HCT116 (cell line): ENCODE measurements at regions of chr1 and their contacts with region 1.

Region 1: GRCh38 chr1:208245185-208245705 is 1.1 kb upstream of the PLXNA2 start:
- DNase-seq: peak; percentile 81
- ATAC-seq: peak; percentile 80
- H3K4me3 ChIP-seq: peak overlapping the region; percentile 44 to 62
- H3K27ac ChIP-seq: no peak overlapping the region
- H3K4me1 ChIP-seq: peaks cover 9 to 18% of the 10 kb centered on the region in 2 experiments; a peak in 3 of 4 replicates
- H3K27me3 ChIP-seq: peaks cover 51% of the 10 kb centered on the region
- CTCF ChIP-seq: peak; percentile 73 to 83 (median 79)
- POLR2A ChIP-seq: no peak
- RAD21 ChIP-seq: peak; percentile 77

Region 2: GRCh38 chr1:207997486-207998268 is 247.6 kb before region 1 on chr1:
- CTCF ChIA-PET with region 1: interaction called, 10 read pairs
- POLR2A ChIA-PET with region 1: no interaction called
- RAD21 ChIA-PET with region 1: no interaction called
- intact Hi-C with region 1: no loop called
- DNase-seq: peak; percentile 41
- ATAC-seq: peak; percentile 92
- H3K4me3 ChIP-seq: no peak overlapping the region
- H3K27ac ChIP-seq: no peak overlapping the region
- H3K4me1 ChIP-seq: no peaks in the 10 kb centered on the region
- H3K27me3 ChIP-seq: peaks cover 20% of the 10 kb centered on the region
- CTCF ChIP-seq: peak; percentile 56 to 75 (median 74)
- POLR2A ChIP-seq: no peak
- RAD21 ChIP-seq: peak; percentile 30; the same call in 1 of the 2 replicates

Region 3: GRCh38 chr1:208025031-208025430 is 220.2 kb before region 1 on chr1:
- CTCF ChIA-PET with region 1: interaction called, 73 read pairs
- POLR2A ChIA-PET with region 1: interaction called, 3 read pairs
- RAD21 ChIA-PET with region 1: interaction called, 5 to 8 read pairs
- intact Hi-C with region 1: loop called (anchors 1 kb)
- DNase-seq: no peak
- ATAC-seq: no peak
- H3K4me3 ChIP-seq: no peak overlapping the region
- H3K27ac ChIP-seq: no peak overlapping the region
- H3K4me1 ChIP-seq: no peaks in the 10 kb centered on the region
- H3K27me3 ChIP-seq: peaks cover 20% of the 10 kb centered on the region
- CTCF ChIP-seq: no peak
- POLR2A ChIP-seq: no peak
- RAD21 ChIP-seq: no peak

Region 4: GRCh38 chr1:208036109-208036808 is 209.0 kb before region 1 on chr1:
- CTCF ChIA-PET with region 1: no interaction called
- POLR2A ChIA-PET with region 1: no interaction called
- RAD21 ChIA-PET with region 1: no interaction called
- intact Hi-C with region 1: loop called (anchors 5 kb)
- DNase-seq: peak; percentile 18
- ATAC-seq: peak; percentile 89
- H3K4me3 ChIP-seq: no peak overlapping the region
- H3K27ac ChIP-seq: no peak overlapping the region
- H3K4me1 ChIP-seq: no peaks in the 10 kb centered on the region
- H3K27me3 ChIP-seq: no peaks in the 10 kb centered on the region; the same call in none of the 2 replicates
- CTCF ChIP-seq: peak; percentile 35 to 49 (median 43); a peak in 5 of 6 replicates
- POLR2A ChIP-seq: no peak
- RAD21 ChIP-seq: peak; percentile 44

Region 5: GRCh38 chr1:208045463-208046260 is 199.6 kb before region 1 on chr1:
- CTCF ChIA-PET with region 1: interaction called, 10 read pairs
- POLR2A ChIA-PET with region 1: no interaction called
- RAD21 ChIA-PET with region 1: no interaction called
- intact Hi-C with region 1: no loop called
- DNase-seq: peak; percentile 28
- ATAC-seq: peak; percentile 85
- H3K4me3 ChIP-seq: no peak overlapping the region
- H3K27ac ChIP-seq: no peak overlapping the region
- H3K4me1 ChIP-seq: no peaks in the 10 kb centered on the region
- H3K27me3 ChIP-seq: no peaks in the 10 kb centered on the region
- CTCF ChIP-seq: peak; percentile 83 to 95 (median 89)
- POLR2A ChIP-seq: no peak
- RAD21 ChIP-seq: peak; percentile 53

Region 6: DNA sequence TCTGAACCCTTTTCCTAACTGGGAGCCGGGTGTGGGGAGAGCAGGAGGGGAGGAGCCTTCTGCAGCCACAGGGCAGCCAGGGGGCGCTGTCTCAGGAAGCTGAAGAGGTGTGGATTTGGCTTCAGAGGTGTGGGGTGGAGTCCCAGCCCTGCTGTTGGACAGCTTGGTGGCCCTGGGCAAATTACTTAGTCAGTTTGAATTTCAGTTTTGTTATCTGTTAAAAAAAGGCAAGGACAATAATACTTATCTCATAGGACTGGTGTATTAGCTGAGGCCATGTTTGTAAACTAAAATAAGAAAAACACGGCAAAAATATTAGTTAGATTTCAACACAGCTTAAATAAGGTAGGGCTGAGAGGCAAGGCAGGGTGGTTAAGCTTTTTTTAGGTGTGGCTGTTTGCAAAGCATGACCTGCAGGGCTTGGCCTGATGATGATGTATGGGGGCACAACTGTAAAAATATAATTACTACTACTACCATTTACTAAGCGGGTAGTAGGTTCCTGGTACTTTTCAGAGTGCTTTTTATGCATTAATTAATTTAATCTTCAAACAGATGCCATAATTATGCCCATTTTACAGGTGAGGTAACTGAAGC is 112.9 kb before region 1 on chr1:
- CTCF ChIA-PET with region 1: interaction called, 37 read pairs
- POLR2A ChIA-PET with region 1: no interaction called
- RAD21 ChIA-PET with region 1: interaction called in 1 of 2 experiments, 3 read pairs
- intact Hi-C with region 1: loop called (anchors 1 kb)
- DNase-seq: peak; percentile 56
- ATAC-seq: peak; percentile 100
- H3K4me3 ChIP-seq: no peak overlapping the region
- H3K27ac ChIP-seq: no peak overlapping the region
- H3K4me1 ChIP-seq: peaks cover 3 to 11% of the 10 kb centered on the region in 2 experiments; a peak in 3 of 4 replicates
- H3K27me3 ChIP-seq: no peaks in the 10 kb centered on the region
- CTCF ChIP-seq: peak; percentile 77 to 98 (median 96)
- POLR2A ChIP-seq: no peak
- RAD21 ChIP-seq: peak; percentile 66

Region 7: DNA sequence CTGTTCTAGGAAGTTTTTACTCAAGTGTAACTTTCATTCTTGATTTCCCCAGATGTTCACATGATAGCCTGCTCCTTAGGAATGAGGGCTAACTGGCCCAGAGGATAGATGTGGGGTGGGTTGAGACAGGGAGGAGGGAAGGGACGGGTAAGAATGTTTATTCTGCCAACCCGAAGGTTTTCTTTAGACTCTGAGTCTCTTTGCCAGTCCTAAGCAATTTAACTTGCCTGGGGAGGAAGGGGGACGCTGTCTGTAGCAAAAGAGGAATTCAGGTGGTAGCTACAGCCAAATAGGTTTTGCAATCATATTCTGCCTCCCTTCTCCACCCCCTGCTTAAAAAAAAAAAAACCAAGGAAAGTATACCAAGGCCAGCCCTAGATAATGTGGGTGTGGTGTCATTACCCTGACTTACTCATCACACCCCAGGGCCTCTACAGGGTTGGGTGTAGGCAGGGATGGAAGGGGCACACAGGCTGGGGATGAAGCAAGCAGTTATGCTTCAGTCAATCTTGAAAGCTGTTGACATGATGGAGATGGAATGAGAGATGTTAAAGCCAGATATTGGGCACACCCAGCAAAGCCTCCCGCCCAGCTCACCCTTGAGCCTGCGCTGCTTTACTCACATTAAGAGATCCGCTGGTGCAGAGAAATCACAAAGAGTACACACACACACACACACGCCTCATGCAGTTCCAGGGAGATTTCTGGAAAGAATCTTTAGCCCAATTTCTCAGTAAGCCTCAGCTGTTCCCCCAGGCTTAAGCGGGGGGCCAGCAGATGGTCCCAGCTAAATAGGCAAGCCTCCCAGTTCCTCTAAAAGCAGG is 60.9 kb before region 1 on chr1:
- CTCF ChIA-PET with region 1: interaction called, 3 read pairs
- POLR2A ChIA-PET with region 1: no interaction called
- RAD21 ChIA-PET with region 1: no interaction called
- intact Hi-C with region 1: loop called (anchors 2 kb)
- DNase-seq: peak; percentile 18
- ATAC-seq: peak; percentile 90
- H3K4me3 ChIP-seq: no peak overlapping the region
- H3K27ac ChIP-seq: no peak overlapping the region
- H3K4me1 ChIP-seq: peaks cover 8 to 13% of the 10 kb centered on the region in 2 experiments
- H3K27me3 ChIP-seq: 0 out of 2 replicates have a peak, but pooled peaks cover 6% of the 10 kb centered on the region
- CTCF ChIP-seq: no peak
- POLR2A ChIP-seq: no peak
- RAD21 ChIP-seq: no peak